Calu3 (cell line): ENCODE measurements at regions of chr17 and their contacts with region 1.

Region 1: DNA sequence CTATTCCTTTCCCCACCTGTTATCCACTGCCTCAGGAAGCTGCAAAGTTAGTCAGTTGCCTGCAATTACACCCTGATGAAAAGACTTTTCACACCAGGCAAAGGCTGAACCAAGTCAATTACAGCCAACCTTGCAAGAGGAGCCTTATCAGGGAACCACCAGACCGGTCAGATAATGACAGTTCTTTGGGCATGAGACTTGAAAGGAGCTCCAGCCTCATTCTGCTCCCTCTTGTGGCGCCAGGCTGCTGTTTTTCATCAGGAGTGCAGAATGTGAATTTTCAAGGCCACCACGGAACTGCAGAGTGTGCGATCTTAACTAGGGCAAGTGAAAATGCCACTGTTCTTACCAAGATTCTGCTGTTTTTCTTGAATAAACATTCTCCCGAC is 22.5 kb downstream of the DNAI2 start:
- DNase-seq: peak; percentile 51
- H3K4me3 Mint-ChIP-seq: no peak overlapping the region
- H3K27ac Mint-ChIP-seq: no peak overlapping the region
- H3K4me1 Mint-ChIP-seq: peaks cover 9% of the 10 kb centered on the region
- H3K27me3 Mint-ChIP-seq: peaks cover 71% of the 10 kb centered on the region
- CTCF ChIP-seq: peak; percentile 30

Region 2: DNA sequence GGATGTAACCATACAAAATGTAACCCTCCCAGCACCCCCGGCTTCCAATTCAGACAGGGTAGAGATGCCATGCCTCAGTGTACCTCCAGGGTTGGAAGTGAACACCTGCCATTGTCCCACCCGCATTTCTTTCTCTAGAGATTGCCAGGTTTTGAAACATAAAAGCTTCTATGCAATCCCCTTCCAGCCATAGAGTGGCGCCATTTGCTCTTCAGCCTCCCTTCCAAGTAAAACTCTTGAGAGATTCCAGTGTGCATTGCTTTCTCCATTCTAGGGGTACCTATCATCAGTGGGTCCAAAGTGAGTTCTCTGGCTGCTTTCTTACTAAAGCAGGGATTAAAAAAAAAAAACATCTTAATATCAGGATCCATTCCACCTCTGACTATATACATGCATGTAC is 226.2 kb before region 1 on chr17:
- CTCF ChIA-PET with region 1: no interaction called
- intact Hi-C with region 1: no loop called
- DNase-seq: no peak
- H3K4me3 Mint-ChIP-seq: no peak overlapping the region
- H3K27ac Mint-ChIP-seq: no peak overlapping the region
- H3K4me1 Mint-ChIP-seq: no peaks in the 10 kb centered on the region
- H3K27me3 Mint-ChIP-seq: peaks cover 52% of the 10 kb centered on the region
- CTCF ChIP-seq: no peak

Region 3: GRCh38 chr17:74280093-74280513 is 16.4 kb before region 1 on chr17:
- CTCF ChIA-PET with region 1: interaction called, 10 read pairs
- intact Hi-C with region 1: no loop called
- DNase-seq: no peak
- H3K4me3 Mint-ChIP-seq: no peak overlapping the region
- H3K27ac Mint-ChIP-seq: no peak overlapping the region
- H3K4me1 Mint-ChIP-seq: no peaks in the 10 kb centered on the region
- H3K27me3 Mint-ChIP-seq: peaks cover 33% of the 10 kb centered on the region
- CTCF ChIP-seq: no peak

Region 4: GRCh38 chr17:74354123-74354522 is 57.6 kb after region 1 on chr17:
- CTCF ChIA-PET with region 1: no interaction called
- intact Hi-C with region 1: loop called (anchors 2 kb)
- DNase-seq: peak; percentile 76
- H3K4me3 Mint-ChIP-seq: peak overlapping the region; percentile 22
- H3K27ac Mint-ChIP-seq: no peak overlapping the region
- H3K4me1 Mint-ChIP-seq: peaks cover 9% of the 10 kb centered on the region
- H3K27me3 Mint-ChIP-seq: peaks cover 90% of the 10 kb centered on the region
- CTCF ChIP-seq: peak; percentile 84